ENCODE measurements at regions of chr3 and their contacts with region 1.

Region 1: GRCh38 chr3:42101048-42101447 is 9.9 kb downstream of the TRAK1 start:
- DNase-seq: no peak
- H3K4me3 ChIP-seq: no peak overlapping the region
- H3K27ac ChIP-seq: no peak overlapping the region
- H3K4me1 ChIP-seq: peaks cover 3 to 10% of the 10 kb centered on the region in 2 experiments; a peak in 3 of 4 replicates
- H3K27me3 ChIP-seq: no peaks in the 10 kb centered on the region
- CTCF ChIP-seq: no peak
- EP300 ChIP-seq: no peak
- RAD21 ChIP-seq: no peak

Region 2: GRCh38 chr3:41681479-41681878 is 419.6 kb before region 1 on chr3:
- CTCF ChIA-PET with region 1: no interaction called
- POLR2A ChIA-PET with region 1: no interaction called
- DNase-seq: no peak
- H3K4me3 ChIP-seq: no peak overlapping the region
- H3K27ac ChIP-seq: no peak overlapping the region; a peak in 1 of 4 replicates
- H3K4me1 ChIP-seq: no peaks in the 10 kb centered on the region; a peak in 1 of 4 replicates
- H3K27me3 ChIP-seq: no peaks in the 10 kb centered on the region
- CTCF ChIP-seq: no peak
- EP300 ChIP-seq: no peak; a peak in 1 of 4 replicates
- RAD21 ChIP-seq: no peak

Region 3: GRCh38 chr3:41912280-41912679 is 188.8 kb before region 1 on chr3:
- CTCF ChIA-PET with region 1: interaction called, 15 read pairs
- POLR2A ChIA-PET with region 1: no interaction called
- DNase-seq: no peak
- H3K4me3 ChIP-seq: no peak overlapping the region
- H3K27ac ChIP-seq: no peak overlapping the region
- H3K4me1 ChIP-seq: no peaks in the 10 kb centered on the region
- H3K27me3 ChIP-seq: no peaks in the 10 kb centered on the region
- CTCF ChIP-seq: no peak
- EP300 ChIP-seq: no peak
- RAD21 ChIP-seq: no peak

Region 4: DNA sequence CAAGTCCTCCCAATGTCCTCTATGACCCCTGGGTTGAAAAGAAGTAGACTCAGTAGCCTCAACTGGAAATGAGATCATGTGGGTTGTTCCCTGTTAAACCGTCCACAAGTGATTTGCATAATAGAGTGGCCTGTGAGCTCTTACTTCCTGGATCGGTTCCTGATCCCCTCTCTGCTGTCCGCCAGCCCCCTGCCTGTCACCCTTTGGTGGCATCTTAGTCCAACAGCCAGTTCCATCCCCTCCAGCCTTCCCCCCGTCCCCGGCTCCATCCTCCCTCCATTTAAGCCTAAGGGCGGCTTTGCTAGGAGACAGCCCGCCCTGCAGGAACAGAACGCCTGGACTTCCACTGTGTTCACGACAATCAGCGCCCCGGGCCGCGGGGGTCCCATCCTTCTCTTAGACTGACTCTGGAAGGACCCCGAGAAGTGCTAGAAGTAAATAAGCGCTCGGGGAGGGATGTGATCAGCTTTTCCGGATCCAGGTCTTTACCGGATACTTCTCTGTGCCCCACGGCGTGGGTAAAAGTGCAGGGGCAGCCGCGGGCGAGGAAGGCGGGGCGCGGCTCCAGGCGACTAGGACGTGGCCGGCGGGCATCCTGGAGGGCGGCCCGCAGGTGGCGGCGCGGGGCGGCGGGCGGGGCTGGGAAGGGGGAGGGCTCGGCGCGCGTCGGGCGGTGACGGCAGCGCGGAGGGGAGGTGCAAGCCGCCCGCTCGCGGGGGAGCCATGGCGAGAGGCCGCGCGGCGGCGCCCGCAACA is 87.9 kb before region 1 on chr3:
- CTCF ChIA-PET with region 1: interaction called, 51 read pairs
- POLR2A ChIA-PET with region 1: no interaction called
- DNase-seq: peak; percentile 96
- H3K4me3 ChIP-seq: peak overlapping the region; percentile 71 to 77
- H3K27ac ChIP-seq: peak overlapping the region in 1 of 2 experiments; percentile 13; a peak in 1 of 4 replicates
- H3K4me1 ChIP-seq: peaks cover 5 to 11% of the 10 kb centered on the region in 2 experiments; a peak in 2 of 4 replicates
- H3K27me3 ChIP-seq: no peaks in the 10 kb centered on the region
- CTCF ChIP-seq: no peak; the same call in 1 of the 2 replicates
- EP300 ChIP-seq: no peak
- RAD21 ChIP-seq: peak; percentile 9; the same call in 1 of the 2 replicates

Region 5: DNA sequence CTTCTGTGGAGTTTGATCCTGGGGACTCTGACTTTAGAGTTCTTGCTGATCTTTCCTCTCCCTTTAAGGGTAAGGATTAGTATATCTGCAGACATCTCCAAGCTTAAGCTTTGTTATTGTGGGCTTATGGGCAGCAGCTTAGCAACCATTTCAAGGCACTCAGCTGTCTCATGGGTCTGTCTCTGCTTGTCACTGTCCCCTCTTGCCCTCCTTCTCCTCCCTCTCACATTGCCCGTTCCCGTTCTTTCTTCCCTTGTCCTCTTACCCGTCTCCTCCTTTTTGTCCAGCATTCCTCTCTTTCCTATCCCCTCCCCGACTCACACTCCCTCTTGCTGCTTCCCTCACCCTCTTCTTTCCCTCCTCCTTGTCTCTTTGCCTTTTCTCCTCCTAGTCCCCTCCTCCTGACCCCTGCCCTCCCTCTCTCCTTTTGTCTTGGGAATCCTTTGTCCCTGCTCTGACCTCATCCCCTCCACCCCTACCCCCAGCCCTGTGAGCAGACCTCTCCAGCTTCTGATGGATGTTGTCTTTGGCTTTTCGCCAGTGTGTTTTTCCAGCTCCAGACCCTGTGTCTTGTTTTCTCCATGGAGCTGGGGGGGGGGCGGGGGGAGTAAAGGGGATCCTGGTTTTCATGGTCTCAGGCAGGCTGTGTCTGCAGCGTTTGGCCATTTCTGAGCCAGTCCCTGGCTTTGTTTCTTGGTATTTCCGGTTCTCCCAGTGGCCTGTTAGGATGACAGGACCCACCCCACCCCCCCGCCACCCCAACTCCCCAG is 57.8 kb before region 1 on chr3:
- CTCF ChIA-PET with region 1: interaction called, 18 read pairs
- POLR2A ChIA-PET with region 1: no interaction called
- DNase-seq: peak; percentile 88
- H3K4me3 ChIP-seq: peak overlapping the region in 1 of 2 experiments; percentile 10; a peak in 3 of 4 replicates
- H3K27ac ChIP-seq: peak overlapping the region; percentile 92 to 97
- H3K4me1 ChIP-seq: peaks cover 19 to 25% of the 10 kb centered on the region in 2 experiments
- H3K27me3 ChIP-seq: no peaks in the 10 kb centered on the region
- CTCF ChIP-seq: no peak
- EP300 ChIP-seq: no peak; a peak in 1 of 4 replicates
- RAD21 ChIP-seq: no peak

Region 6: DNA sequence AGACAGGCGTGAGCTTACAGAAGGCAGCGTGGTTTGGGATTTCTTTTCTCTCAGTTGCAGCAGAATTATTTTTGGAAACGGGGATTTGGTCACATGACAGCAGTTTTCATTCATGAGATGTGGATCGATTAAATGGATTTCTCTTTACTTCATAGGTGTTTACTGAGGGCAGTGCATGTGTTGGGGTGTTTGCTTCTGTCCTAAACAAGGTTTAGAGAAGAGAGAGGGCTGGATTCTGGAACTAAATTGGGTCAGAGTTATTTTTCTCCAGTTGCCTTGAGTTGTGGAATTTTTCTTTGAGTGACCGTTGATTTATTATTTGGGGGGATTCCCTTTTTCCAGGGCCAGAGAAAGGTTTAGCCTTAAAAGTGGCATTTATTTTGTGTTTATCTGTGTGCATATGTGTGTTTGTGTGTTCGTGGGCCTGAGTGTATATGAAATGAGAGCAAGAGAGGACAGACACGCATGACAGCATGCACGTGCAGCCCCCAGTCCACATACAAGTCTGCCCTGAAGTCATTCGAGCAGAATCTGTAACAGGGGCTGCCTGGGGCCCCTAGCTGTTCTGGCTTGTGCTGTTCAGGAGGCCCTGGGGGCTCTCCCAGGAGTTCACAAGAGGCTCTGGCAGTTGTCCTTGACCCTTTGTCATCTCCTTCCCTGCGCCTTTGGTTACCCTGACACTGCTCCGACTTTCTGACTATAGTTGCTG is 28.3 kb before region 1 on chr3:
- CTCF ChIA-PET with region 1: interaction called, 19 read pairs
- POLR2A ChIA-PET with region 1: no interaction called
- DNase-seq: no peak
- H3K4me3 ChIP-seq: peak overlapping the region; percentile 37 to 64
- H3K27ac ChIP-seq: peak overlapping the region; percentile 86 to 92
- H3K4me1 ChIP-seq: peaks cover 8 to 17% of the 10 kb centered on the region in 2 experiments; a peak in 3 of 4 replicates
- H3K27me3 ChIP-seq: no peaks in the 10 kb centered on the region
- CTCF ChIP-seq: no peak
- EP300 ChIP-seq: no peak
- RAD21 ChIP-seq: no peak

Region 7: DNA sequence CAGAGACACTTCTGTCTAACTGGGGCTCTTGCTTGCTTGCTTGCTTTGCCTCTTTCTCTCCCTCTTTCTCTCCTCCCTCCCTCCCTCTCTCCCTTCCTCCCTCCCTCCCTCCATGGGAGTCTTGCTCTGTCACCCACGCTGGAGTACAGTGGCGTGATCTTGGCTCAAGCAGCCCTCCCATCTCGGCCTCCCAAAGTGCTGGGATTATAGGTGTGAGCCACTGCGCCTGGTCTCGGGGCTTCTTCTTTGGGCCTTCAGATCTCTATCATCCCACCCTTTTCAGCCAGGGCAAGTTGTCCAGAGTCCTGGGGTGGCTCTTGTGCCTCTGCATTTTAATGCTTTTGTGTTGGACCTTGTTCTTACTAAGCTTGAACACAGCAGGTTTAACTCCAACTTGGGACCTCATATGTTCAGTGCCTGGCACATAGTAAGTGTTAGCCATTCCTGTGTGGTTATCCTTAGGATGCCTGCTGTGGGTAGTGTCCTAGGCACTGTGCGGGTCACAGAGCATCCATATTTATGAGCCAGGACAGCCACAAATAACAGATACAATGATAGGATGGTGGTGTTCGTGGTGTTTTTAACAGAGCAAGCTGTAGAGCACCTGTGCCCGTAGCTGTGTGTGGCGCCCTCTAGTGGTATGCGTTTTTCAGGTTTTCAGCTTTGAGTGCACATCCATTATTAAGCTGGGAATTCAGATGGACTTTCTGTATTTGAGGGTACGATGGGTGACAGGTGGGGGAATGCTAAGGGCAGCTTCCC is 89.8 kb after region 1 on chr3:
- CTCF ChIA-PET with region 1: interaction called, 23 read pairs
- POLR2A ChIA-PET with region 1: no interaction called
- DNase-seq: peak; percentile 67
- H3K4me3 ChIP-seq: peak overlapping the region in 1 of 2 experiments; percentile 26; a peak in 1 of 4 replicates
- H3K27ac ChIP-seq: no peak overlapping the region; a peak in 1 of 4 replicates
- H3K4me1 ChIP-seq: peaks cover 0 to 2% of the 10 kb centered on the region in 2 experiments; a peak in 1 of 4 replicates
- H3K27me3 ChIP-seq: no peaks in the 10 kb centered on the region
- CTCF ChIP-seq: peak; percentile 91
- EP300 ChIP-seq: no peak
- RAD21 ChIP-seq: peak; percentile 78

Measured in SK-N-SH (cell line).